GM10248 (cell line): ENCODE measurements at regions of chr1 and their contacts with region 1.

Region 1: GRCh38 chr1:19661721-19662228 is 2.9 kb upstream of the HTR6 start:
- DNase-seq: no peak
- CTCF ChIP-seq: peak; percentile 58

Region 2: GRCh38 chr1:18597160-18598042 is 1064.4 kb before region 1 on chr1:
- CTCF ChIA-PET with region 1: interaction called, 11 read pairs
- POLR2A ChIA-PET with region 1: interaction called, 4 read pairs
- DNase-seq: peak; percentile 57
- CTCF ChIP-seq: peak; percentile 85

Region 3: GRCh38 chr1:19390901-19391595 is 270.7 kb before region 1 on chr1:
- CTCF ChIA-PET with region 1: interaction called, 21 read pairs
- POLR2A ChIA-PET with region 1: no interaction called
- DNase-seq: peak; percentile 77
- CTCF ChIP-seq: peak; percentile 72

Region 4: DNA sequence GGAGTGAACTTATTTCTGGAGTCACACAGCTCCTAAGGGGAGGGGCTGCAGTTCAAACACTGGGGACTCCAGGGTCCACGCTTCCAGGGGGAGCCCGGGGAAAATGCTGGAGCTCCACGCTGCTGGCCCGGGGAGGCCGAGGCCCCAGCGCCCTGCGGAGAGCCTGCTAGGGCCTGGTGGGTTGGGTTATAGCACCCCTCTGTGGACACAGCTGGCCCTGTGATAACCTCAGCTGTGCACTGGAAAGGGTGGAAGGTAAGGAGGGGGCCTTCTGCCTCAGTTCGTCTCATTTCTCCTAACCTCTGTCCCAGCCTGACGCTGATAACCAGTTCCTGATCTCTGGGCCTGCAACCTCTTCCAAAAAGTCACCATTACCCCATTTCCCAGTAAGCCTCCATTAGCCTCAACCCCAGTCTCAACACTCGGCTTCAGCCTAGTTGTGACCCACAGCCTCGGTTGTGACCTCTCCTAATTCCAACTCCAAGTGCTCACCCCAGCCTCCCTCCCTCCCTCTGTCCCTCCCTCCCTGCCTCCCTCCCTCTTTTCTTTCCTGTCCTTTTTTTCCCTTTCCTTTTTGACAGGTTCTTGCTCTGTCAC is 10.5 kb before region 1 on chr1:
- CTCF ChIA-PET with region 1: interaction called, 46 read pairs
- POLR2A ChIA-PET with region 1: no interaction called
- DNase-seq: peak; percentile 77
- CTCF ChIP-seq: peak; percentile 85

Region 5: DNA sequence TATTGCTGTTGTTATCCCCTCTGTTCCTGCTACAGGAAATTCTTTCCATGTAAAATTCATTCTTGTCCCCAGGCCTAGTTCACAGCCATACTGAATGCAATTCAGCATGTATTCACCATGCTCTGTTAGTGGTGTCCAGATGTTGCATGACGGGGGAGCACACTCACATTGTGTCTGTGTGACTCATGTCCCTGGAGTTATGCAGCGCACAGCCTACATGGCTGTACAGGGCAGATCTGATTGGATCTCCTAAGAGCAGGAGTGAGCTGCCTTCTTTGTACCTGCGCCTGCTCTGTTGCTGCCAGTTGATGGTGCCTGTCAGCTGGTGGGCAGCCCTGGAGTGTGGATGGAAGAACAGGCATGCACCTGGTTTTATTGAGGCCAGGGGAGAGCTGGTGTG is 20.5 kb after region 1 on chr1:
- CTCF ChIA-PET with region 1: interaction called, 18 read pairs
- POLR2A ChIA-PET with region 1: no interaction called
- DNase-seq: no peak
- CTCF ChIP-seq: no peak

Region 6: DNA sequence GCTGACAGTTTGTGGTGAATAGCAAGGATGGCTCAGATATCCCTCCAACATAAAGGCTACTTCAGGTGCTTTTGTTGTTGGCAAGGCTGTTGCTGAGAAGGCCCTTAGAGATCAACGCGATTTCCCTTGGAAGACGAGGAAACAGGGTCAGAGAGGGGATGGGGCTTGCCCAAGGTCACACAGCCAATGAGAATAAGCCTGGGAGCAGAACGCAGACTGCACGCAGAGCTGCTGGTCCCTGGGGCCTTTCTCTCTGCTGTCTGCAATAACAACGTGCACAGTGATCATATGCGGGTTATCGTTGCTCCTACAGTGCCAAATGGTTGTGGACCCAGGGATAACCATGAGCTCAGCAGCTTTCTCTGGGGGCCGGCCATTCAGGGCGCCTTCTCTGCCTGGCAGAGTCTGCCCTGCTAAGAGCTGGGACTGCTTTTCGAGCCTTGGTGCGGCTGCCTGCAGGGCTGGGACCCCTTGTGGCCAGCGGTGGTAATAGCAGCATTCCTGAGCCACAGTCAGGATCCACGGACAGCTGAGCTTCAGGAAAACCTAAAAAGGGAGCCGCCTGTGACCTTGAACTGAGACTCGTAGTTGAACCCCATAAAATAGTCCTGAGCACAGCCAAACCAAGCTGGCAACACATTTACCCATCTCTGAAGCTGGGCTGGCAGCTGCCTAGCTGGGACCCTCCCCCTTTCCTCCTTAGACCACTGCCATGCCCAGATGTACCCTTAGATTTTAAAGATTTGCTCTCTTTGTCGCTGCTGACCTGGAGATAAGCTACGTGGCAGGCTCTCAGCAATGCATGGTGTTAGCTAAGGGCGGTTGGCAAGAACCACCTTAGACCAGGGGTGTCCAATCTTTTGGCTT is 42.7 kb after region 1 on chr1:
- CTCF ChIA-PET with region 1: interaction called, 114 read pairs
- POLR2A ChIA-PET with region 1: no interaction called
- DNase-seq: peak; percentile 74
- CTCF ChIP-seq: peak; percentile 96

Region 7: DNA sequence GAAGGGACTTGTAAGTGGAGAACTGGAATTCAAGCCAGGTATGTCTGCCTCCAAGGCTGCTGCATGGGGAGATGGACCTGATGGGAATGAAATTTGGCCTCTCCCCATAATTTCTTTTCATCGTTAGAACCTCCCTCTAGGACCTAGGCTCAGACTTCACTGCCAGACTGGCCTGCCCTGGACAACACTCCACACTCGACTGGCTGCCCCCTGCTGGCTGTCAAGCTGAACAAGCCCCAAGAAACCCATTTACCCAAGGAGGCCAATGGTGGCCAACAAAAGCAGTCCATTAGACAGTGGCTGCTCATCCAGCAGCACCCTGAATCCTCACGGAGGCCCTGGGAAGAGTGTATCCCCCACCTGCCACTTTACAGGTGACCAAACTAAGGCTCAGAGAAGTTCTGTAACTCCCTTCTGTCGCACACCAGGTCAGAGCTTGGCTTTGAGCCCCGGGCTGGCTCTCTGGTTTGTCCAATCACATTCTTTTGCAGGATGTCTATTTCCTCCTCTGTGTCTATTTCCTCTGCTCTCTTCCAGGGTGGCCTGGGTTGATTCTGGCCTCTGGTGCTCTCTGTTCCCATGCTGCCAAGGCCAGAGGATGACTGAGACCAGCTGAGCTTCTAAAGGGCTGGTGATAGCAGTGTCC is 149.6 kb after region 1 on chr1:
- CTCF ChIA-PET with region 1: interaction called, 24 read pairs
- POLR2A ChIA-PET with region 1: no interaction called
- DNase-seq: peak; percentile 75
- CTCF ChIP-seq: peak; percentile 81